Activated CD4-positive, alpha-beta T cell treated with anti-CD3 and anti-CD28 coated beads for 36 hours (primary cell): ENCODE measurements at regions of chr1 and their contacts with region 1.

Region 1: DNA sequence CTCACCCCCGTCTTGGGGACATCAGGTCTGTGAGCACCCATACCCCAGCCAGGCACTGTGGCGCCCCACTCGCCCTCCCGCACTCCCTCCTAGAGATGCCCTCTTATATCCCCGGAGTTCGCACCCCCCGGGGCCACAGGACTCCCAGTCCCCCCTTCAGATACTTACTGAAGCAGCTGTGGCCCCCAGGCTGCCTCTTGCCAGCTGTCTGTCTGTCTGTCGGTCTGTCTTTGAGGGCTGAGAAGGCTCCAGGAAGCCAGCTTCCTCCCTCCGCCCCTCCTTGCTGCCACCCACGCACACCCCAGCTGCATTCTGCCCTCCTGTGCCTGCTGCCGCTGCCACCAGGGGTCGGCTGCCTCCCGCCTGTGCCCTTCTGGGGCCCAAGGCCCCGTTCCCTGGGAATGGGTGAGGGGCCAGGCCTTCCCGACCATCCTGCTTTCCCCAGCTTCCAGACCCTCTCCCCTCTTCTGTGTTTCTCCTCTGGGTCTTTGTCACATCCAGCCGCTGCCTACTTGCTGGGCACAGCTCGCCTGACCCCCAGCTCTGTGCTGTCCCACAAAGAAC is at the start of gene PTPN7:
- DNase-seq: peak; percentile 98
- ATAC-seq: peak; percentile 69
- H3K4me3 Mint-ChIP-seq: peak within 1 kb of the TSS; percentile 97
- H3K27ac Mint-ChIP-seq: peak within 1 kb of the TSS; percentile 99
- H3K4me1 Mint-ChIP-seq: peaks cover 80% of the 10 kb centered on the region
- H3K27me3 Mint-ChIP-seq: no peaks in the 10 kb centered on the region
- total RNA-seq, gene PTPN7: 188 to 221 TPM

Region 2: GRCh38 chr1:201982623-201983379 is 177.7 kb before region 1 on chr1 and contains the start of gene RNPEP:
- CTCF ChIA-PET with region 1: no interaction called
- POLR2A ChIA-PET with region 1: no interaction called
- intact Hi-C with region 1: loop called in 1 of 2 experiments (anchors 1 kb)
- DNase-seq: peak; percentile 69
- ATAC-seq: peak; percentile 82
- H3K4me3 Mint-ChIP-seq: peak within 1 kb of the TSS; percentile 86
- H3K27ac Mint-ChIP-seq: peak within 1 kb of the TSS; percentile 80
- H3K4me1 Mint-ChIP-seq: peaks cover 16% of the 10 kb centered on the region
- H3K27me3 Mint-ChIP-seq: no peaks in the 10 kb centered on the region
- total RNA-seq, gene RNPEP: 44.9 to 49.2 TPM

Region 3: GRCh38 chr1:202105539-202106276 is 54.8 kb before region 1 on chr1:
- CTCF ChIA-PET with region 1: no interaction called
- POLR2A ChIA-PET with region 1: no interaction called
- intact Hi-C with region 1: no loop called
- DNase-seq: no peak
- ATAC-seq: no peak
- H3K4me3 Mint-ChIP-seq: no peak overlapping the region
- H3K27ac Mint-ChIP-seq: no peak overlapping the region
- H3K4me1 Mint-ChIP-seq: no peaks in the 10 kb centered on the region
- H3K27me3 Mint-ChIP-seq: no peaks in the 10 kb centered on the region